ENCODE measurements at regions of chr17 and their contacts with region 1.

Region 1: DNA sequence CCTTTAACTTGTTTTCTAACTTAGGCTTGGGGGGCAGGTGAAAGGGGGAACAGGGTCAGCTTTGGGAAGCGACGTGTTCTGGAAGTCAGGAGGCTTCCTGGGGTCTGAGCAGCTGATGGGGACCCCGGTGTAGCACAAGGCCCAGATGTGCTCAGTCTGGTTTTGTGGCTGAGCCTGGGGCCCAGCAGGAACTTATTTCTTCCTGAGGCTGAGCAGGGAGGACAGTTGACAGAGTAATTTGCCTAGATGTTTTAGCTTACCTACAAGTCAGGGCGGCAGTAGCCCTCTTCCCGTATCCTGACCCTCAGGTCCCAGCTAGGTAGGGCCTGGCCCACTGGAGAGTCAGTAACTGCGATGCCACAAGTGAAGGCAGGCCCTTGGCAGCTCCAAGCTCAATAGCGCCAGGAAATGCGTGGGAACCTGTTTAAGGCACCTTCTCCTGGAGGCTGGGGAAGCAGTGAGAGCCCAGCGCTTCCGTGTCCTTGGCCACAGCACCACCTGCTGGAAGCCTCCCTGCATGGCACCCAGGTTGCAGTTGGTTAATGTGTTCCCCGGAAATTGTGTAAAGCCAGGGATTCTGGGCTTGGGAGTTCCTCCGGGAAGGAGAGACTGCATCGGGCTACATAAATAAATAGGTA is 5.2 kb downstream of the CCR7 start:
- DNase-seq: peak; percentile 86
- ATAC-seq: peak; percentile 13
- H3K4me3 Mint-ChIP-seq: peak overlapping the region; percentile 96
- H3K27ac Mint-ChIP-seq: peak overlapping the region; percentile 99
- H3K4me1 Mint-ChIP-seq: peaks cover 61% of the 10 kb centered on the region
- H3K27me3 Mint-ChIP-seq: no peaks in the 10 kb centered on the region
- CTCF ChIP-seq: peak; percentile 98

Region 2: DNA sequence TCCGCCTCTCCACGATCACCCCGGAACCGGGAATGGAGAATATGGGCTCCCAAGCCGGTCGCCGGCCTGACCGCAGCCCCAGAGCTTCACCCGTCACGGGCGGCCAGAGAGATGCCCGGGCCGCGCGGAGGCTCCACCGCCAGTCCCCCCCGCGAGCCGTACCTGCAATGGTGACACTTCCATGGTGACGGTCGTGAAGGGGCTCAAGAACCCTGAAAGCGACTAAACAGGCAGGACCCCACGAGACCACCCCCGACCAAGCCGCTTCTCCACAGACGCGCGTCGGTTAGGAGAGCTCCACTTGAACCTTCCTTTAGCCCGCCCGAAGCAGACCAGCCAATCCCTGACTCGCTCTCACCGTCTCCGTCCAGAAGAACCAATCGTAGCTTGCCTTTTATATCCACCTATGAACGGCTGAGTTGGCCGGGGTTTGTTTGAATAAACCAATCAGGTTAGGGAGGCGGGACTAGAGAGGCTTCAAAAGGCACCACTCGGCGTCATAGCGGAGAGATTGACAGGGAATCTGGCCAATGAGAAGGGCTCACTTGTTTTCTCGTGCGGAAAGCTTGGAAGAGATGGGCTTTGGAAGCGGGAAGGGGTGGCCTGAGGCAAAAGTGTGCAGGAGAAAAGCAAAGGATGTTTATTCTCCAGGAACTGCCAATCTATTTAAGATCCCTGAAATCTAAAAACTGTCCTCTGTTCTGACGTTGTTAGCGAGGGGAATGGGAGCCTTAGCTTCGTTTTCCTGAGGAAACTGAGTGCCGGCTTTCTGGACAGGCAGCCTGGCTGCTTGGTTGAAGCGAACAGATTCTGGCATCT is 142.3 kb before region 1 on chr17 and contains the start of gene TOP2A:
- CTCF ChIA-PET with region 1: interaction called, 32 read pairs
- POLR2A ChIA-PET with region 1: interaction called, 3 read pairs
- intact Hi-C with region 1: no loop called
- DNase-seq: peak; percentile 97
- ATAC-seq: peak; percentile 99
- H3K4me3 Mint-ChIP-seq: peak within 1 kb of the TSS; percentile 96
- H3K27ac Mint-ChIP-seq: peak within 1 kb of the TSS; percentile 93
- H3K4me1 Mint-ChIP-seq: peaks cover 20% of the 10 kb centered on the region
- H3K27me3 Mint-ChIP-seq: no peaks in the 10 kb centered on the region
- CTCF ChIP-seq: no peak
- total RNA-seq, gene TOP2A: 273 to 280 TPM

Region 3: GRCh38 chr17:40461732-40462342 is 98.2 kb before region 1 on chr17:
- CTCF ChIA-PET with region 1: no interaction called
- POLR2A ChIA-PET with region 1: no interaction called
- intact Hi-C with region 1: no loop called
- DNase-seq: no peak
- ATAC-seq: no peak
- H3K4me3 Mint-ChIP-seq: no peak overlapping the region
- H3K27ac Mint-ChIP-seq: no peak overlapping the region
- H3K4me1 Mint-ChIP-seq: peaks cover 2% of the 10 kb centered on the region
- H3K27me3 Mint-ChIP-seq: peaks cover 1% of the 10 kb centered on the region
- CTCF ChIP-seq: no peak

Region 4: DNA sequence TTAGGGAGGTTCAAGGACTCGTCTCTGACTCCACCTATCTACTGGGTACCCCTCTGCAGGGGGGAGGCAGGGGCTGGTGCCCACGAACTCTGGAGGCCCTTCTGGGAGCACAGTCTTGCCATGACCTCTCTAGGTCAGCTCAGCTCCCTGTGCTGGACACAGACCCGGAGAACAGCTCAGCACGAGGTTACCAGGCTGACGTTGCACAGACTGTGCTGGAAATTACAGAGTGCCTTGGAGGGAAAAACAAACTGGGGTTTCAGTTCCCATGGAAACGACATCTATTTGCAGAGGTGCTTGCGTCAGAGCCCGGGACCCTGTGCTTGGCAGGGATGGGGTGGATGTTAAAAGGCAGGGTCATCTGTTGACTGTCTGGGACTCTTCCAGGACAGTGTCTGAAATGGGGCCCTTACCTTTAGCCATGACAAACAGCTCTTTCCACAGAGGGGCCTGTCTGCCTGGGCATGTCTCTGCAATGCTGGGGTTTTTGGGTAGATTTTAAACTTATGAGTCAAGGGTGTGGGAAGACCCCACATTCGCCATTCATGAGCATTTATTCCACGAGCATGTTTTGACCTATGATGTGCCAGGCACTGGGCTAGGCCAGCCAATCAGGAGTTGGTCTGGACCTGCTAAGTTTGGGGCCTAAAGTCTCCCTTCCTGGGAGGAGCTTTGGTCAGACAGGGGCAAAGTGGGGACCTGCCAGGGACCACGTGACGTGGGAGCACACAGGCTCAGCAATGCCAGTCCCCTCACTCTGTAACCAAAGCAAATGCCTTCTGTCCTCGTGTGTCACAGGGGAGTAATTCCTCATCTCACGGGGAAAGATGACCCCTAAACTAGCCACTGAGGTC is 17.3 kb before region 1 on chr17:
- CTCF ChIA-PET with region 1: interaction called, 234 read pairs
- POLR2A ChIA-PET with region 1: interaction called, 548 read pairs
- intact Hi-C with region 1: loop called (anchors 2 kb)
- DNase-seq: peak; percentile 91
- ATAC-seq: peak; percentile 60
- H3K4me3 Mint-ChIP-seq: peak overlapping the region; percentile 71
- H3K27ac Mint-ChIP-seq: peak overlapping the region; percentile 93
- H3K4me1 Mint-ChIP-seq: peaks cover 91% of the 10 kb centered on the region
- H3K27me3 Mint-ChIP-seq: no peaks in the 10 kb centered on the region
- CTCF ChIP-seq: no peak

Region 5: DNA sequence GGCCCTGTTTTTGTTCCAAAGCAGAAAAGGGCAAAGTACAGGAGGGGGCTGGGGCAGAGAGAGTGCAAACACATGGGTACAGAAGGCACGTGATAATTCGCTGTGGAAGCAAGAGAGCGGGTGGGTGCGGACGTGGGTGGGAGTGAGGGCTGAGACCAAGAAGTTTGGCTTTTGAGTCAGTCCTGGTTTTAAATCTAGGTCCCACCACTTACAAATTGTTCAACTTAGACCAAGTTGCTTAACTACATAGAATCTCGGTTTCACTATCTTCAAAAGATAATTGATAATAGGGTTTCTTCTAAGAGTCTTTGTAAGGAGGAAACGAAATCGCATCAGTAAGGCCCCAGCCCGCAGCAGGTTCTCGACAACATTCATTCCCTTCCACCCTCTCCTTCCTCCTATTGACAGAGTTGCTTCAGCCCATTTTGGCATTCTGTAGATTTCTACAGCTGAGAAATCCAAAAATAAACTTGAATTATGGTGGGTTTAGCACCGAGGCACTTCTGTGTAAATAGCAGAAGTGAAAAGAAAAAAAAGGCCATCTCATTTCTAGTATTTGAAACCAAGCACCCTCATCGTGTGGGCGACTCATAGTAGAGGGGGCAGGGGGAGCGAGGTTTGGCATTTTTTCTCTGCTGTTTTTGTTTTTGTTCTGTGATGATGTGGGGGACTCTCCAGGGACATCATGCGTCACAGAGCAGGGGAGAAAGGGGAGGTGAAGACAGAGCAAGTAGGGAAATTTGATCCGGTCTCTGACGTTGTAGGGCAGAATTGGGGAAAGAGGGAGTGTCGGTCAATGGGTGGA is 38.8 kb after region 1 on chr17:
- CTCF ChIA-PET with region 1: interaction called, 62 read pairs
- POLR2A ChIA-PET with region 1: interaction called, 787 read pairs
- intact Hi-C with region 1: loop called (anchors 2 kb)
- DNase-seq: peak; percentile 94
- ATAC-seq: peak; percentile 60
- H3K4me3 Mint-ChIP-seq: peak overlapping the region; percentile 54
- H3K27ac Mint-ChIP-seq: peak overlapping the region; percentile 99
- H3K4me1 Mint-ChIP-seq: peaks cover 95% of the 10 kb centered on the region
- H3K27me3 Mint-ChIP-seq: no peaks in the 10 kb centered on the region
- CTCF ChIP-seq: no peak

Region 6: GRCh38 chr17:40647624-40648383 is 87.7 kb after region 1 on chr17 and contains the start of gene SMARCE1:
- CTCF ChIA-PET with region 1: interaction called, 8 read pairs
- POLR2A ChIA-PET with region 1: interaction called, 19 read pairs
- intact Hi-C with region 1: no loop called
- DNase-seq: peak; percentile 70
- ATAC-seq: peak; percentile 74
- H3K4me3 Mint-ChIP-seq: peak within 1 kb of the TSS; percentile 81
- H3K27ac Mint-ChIP-seq: peak within 1 kb of the TSS; percentile 92
- H3K4me1 Mint-ChIP-seq: peaks cover 38% of the 10 kb centered on the region
- H3K27me3 Mint-ChIP-seq: no peaks in the 10 kb centered on the region
- CTCF ChIP-seq: no peak
- total RNA-seq, gene SMARCE1: 87.8 to 92.5 TPM

Measured in activated CD8-positive, alpha-beta T cell treated with anti-CD3 and anti-CD28 coated beads for 36 hours (primary cell).